ENCODE measurements at regions of chr3 and their contacts with region 1.

Region 1: GRCh38 chr3:28262001-28262400 is 20.6 kb downstream of the CMC1 start:
- DNase-seq: no peak
- H3K4me3 ChIP-seq: no peak overlapping the region
- H3K27ac ChIP-seq: no peak overlapping the region
- H3K4me1 ChIP-seq: no peaks in the 10 kb centered on the region
- H3K27me3 ChIP-seq: no peaks in the 10 kb centered on the region
- CTCF ChIP-seq: no peak

Region 2: GRCh38 chr3:28224430-28224829 is 37.6 kb before region 1 on chr3:
- CTCF ChIA-PET with region 1: no interaction called
- POLR2A ChIA-PET with region 1: no interaction called
- intact Hi-C with region 1: loop called (anchors 1 kb)
- DNase-seq: no peak
- H3K4me3 ChIP-seq: no peak overlapping the region
- H3K27ac ChIP-seq: no peak overlapping the region
- H3K4me1 ChIP-seq: no peaks in the 10 kb centered on the region
- H3K27me3 ChIP-seq: no peaks in the 10 kb centered on the region
- CTCF ChIP-seq: no peak

Measured in PC-9 (cell line).